PC-9 (cell line): ENCODE measurements at regions of chr14 and their contacts with region 1.

Region 1: GRCh38 chr14:36070031-36070719 is 106.3 kb downstream of the PTCSC3 start:
- DNase-seq: peak; percentile 54 to 59
- H3K4me3 ChIP-seq: no peak overlapping the region
- H3K27ac ChIP-seq: peak overlapping the region; percentile 56; the same call in 1 of the 2 replicates
- H3K4me1 ChIP-seq: peaks cover 23% of the 10 kb centered on the region
- H3K27me3 ChIP-seq: no peaks in the 10 kb centered on the region
- CTCF ChIP-seq: peak; percentile 63

Region 2: GRCh38 chr14:35883677-35884293 is 186.4 kb before region 1 on chr14:
- CTCF ChIA-PET with region 1: interaction called, 8 read pairs
- POLR2A ChIA-PET with region 1: interaction called, 4 read pairs
- intact Hi-C with region 1: loop called (anchors 1 kb)
- DNase-seq: peak in 1 of 2 experiments; percentile 17
- H3K4me3 ChIP-seq: no peak overlapping the region
- H3K27ac ChIP-seq: no peak overlapping the region
- H3K4me1 ChIP-seq: peaks cover 7% of the 10 kb centered on the region
- H3K27me3 ChIP-seq: no peaks in the 10 kb centered on the region
- CTCF ChIP-seq: peak; percentile 64

Region 3: DNA sequence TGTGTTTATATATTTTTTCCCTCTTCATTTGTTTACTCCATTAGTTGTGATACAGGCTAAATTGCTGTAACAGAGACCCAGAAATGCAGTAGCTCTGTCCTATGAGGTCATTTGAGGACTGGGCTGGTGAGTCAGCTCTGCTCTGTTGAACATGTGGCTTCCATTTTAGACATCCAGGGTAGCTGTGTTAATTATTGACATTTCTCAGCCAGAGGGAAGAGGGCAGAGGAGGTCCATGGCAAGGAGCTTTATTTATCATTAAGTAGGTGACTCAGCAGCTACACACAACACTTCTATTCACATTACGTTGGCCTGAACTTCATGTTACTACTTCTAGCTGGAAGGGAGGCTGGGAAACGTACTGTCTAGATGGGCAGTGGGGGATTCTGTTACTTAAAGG is 20.9 kb after region 1 on chr14:
- CTCF ChIA-PET with region 1: interaction called, 12 read pairs
- POLR2A ChIA-PET with region 1: no interaction called
- intact Hi-C with region 1: no loop called
- DNase-seq: peak; percentile 9 to 59
- H3K4me3 ChIP-seq: no peak overlapping the region
- H3K27ac ChIP-seq: no peak overlapping the region
- H3K4me1 ChIP-seq: no peaks in the 10 kb centered on the region
- H3K27me3 ChIP-seq: no peaks in the 10 kb centered on the region
- CTCF ChIP-seq: no peak

Region 4: DNA sequence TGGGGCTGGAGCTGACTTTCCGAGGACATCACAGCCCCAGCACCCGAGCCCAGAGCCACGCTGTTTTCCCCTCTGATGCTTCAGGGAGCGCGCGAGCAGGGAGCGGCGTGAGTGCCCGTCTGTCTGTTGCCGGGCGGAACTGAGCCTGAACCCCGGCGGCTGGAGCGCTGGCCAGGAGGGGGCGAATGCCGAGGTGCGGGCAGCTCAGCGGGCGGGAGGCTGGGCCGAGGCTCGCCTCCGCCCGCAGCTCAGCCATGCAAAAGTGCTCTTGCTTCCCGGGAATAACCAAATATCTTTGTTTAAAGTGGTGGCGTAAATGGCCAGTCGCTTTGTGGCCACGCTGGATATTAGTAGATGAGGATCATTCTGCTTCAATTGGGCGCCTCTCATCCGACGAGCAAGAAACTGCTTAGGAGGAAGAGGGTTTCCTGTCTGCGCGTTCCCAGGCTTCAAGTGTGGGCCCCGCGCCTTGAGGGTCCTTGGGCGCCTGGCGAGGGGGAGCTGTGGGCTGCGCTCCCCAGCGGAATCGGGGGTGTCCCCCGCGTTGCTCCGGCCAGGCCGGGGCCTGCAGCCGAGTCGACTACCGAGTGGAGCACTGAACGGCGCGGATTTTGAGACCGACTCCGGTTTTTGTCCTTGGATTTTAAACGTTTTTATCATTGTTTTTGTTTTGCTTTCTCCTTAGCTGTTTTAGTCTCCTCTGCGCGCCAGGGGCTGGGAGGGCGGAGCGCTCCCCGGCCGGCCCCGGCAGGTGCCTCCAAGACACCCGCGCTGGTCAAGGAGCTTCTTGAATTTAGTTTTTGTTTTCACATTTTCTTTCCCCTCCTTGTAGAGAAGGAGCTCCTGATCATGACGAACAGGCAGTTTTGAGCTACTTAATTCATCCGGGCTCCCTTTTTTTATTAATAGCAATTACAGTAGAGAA is 450.7 kb after region 1 on chr14:
- CTCF ChIA-PET with region 1: interaction called, 6 read pairs
- POLR2A ChIA-PET with region 1: no interaction called
- intact Hi-C with region 1: loop called (anchors 1 kb)
- DNase-seq: peak in 1 of 2 experiments; percentile 52
- H3K4me3 ChIP-seq: peak overlapping the region; percentile 40; the same call in 1 of the 2 replicates
- H3K27ac ChIP-seq: no peak overlapping the region
- H3K4me1 ChIP-seq: no peaks in the 10 kb centered on the region
- H3K27me3 ChIP-seq: peaks cover 1% of the 10 kb centered on the region; the same call in 1 of the 2 replicates
- CTCF ChIP-seq: no peak

Region 5: GRCh38 chr14:36604757-36605505 is 534.8 kb after region 1 on chr14:
- CTCF ChIA-PET with region 1: interaction called, 3 read pairs
- POLR2A ChIA-PET with region 1: no interaction called
- intact Hi-C with region 1: loop called (anchors 2 kb)
- DNase-seq: peak; percentile 51 to 64
- H3K4me3 ChIP-seq: no peak overlapping the region
- H3K27ac ChIP-seq: no peak overlapping the region
- H3K4me1 ChIP-seq: no peaks in the 10 kb centered on the region
- H3K27me3 ChIP-seq: no peaks in the 10 kb centered on the region
- CTCF ChIP-seq: peak; percentile 73